Naive thymus-derived CD4-positive, alpha-beta T cell (primary cell): ENCODE measurements at regions of chr11 and their contacts with region 1.

Region 1: GRCh38 chr11:46238967-46239800 is 38.3 kb upstream of the CREB3L1 start:
- DNase-seq: peak; percentile 62 to 89 (median 78)
- ATAC-seq: peak; percentile 86
- H3K4me3 ChIP-seq: peak overlapping the region; percentile 55
- H3K4me3 Mint-ChIP-seq: peak overlapping the region in 9 of 10 donors; percentile 32 to 79 (median 74)
- H3K27ac ChIP-seq: no peak overlapping the region
- H3K27ac Mint-ChIP-seq: peak overlapping the region in 1 of 9 donors; percentile 43
- H3K4me1 ChIP-seq: peaks cover 12 to 20% of the 10 kb centered on the region in 2 donors
- H3K4me1 Mint-ChIP-seq: peaks cover 18 to 46% (median 31%) of the 10 kb centered on the region in 7 donors
- H3K27me3 ChIP-seq: peaks cover 0 to 4% of the 10 kb centered on the region in 2 donors
- H3K27me3 Mint-ChIP-seq: peaks cover 14 to 28% (median 19%) of the 10 kb centered on the region in 5 donors

Region 2: GRCh38 chr11:45964911-45965389 is 274.2 kb before region 1 on chr11:
- CTCF ChIA-PET with region 1: interaction called, 9 read pairs
- POLR2A ChIA-PET with region 1: no interaction called
- intact Hi-C with region 1: loop called (anchors 5 to 10 kb)
- DNase-seq: peak; percentile 11 to 68 (median 61)
- ATAC-seq: peak; percentile 96
- H3K4me3 ChIP-seq: no peak overlapping the region
- H3K4me3 Mint-ChIP-seq: no peak overlapping the region
- H3K27ac ChIP-seq: no peak overlapping the region
- H3K27ac Mint-ChIP-seq: no peak overlapping the region
- H3K4me1 ChIP-seq: no peaks in the 10 kb centered on the region
- H3K4me1 Mint-ChIP-seq: no peaks in the 10 kb centered on the region
- H3K27me3 ChIP-seq: no peaks in the 10 kb centered on the region
- H3K27me3 Mint-ChIP-seq: no peaks in the 10 kb centered on the region

Region 3: DNA sequence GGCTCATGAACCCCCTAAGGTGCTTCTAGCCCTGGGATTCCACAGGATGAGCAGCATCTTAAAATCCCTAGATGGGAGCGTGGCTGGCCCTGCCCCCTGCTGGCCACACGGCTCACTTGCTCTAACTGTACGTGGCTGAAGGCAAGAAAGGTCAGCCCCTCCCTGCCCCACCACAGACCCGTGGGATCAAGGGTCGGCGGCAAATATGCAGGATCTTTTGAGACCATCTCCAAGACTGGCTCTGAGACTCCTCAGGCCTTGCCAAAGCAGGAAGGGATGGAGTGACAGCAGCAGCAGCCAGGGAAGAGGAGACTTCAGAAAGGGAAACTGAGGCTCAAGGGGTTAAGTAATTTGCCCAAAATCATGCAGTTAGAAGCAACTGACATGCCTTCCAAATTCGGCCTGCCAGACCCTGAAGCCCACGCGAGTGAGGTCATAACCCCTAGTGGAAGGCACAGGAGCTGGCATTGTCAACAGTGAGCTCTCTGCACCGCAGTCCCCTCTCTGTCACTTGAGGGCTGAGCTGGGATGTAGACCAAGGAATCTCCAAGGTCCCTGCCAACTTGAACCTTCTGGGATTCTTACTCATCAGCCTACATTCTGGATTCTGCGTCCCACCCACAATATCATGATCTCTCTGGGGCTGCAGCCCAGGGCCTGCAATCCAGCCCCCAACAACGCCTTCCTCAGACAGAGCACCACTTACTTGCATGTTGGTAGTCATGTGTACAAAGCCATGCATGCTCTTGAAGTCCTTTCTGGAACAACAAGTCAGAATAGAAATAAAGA is 69.6 kb after region 1 on chr11:
- CTCF ChIA-PET with region 1: interaction called, 49 read pairs
- POLR2A ChIA-PET with region 1: interaction called, 3 read pairs
- intact Hi-C with region 1: loop called (anchors 1 kb)
- DNase-seq: peak; percentile 29 to 66 (median 53)
- ATAC-seq: peak; percentile 78
- H3K4me3 ChIP-seq: no peak overlapping the region
- H3K4me3 Mint-ChIP-seq: peak overlapping the region in 2 of 10 donors; percentile 53 to 56
- H3K27ac ChIP-seq: no peak overlapping the region
- H3K27ac Mint-ChIP-seq: peak overlapping the region in 3 of 9 donors; percentile 38 to 56 (median 44)
- H3K4me1 ChIP-seq: peaks cover 0 to 5% of the 10 kb centered on the region in 2 donors
- H3K4me1 Mint-ChIP-seq: peaks cover 10 to 23% (median 19%) of the 10 kb centered on the region in 7 donors
- H3K27me3 ChIP-seq: no peaks in the 10 kb centered on the region
- H3K27me3 Mint-ChIP-seq: peaks cover 0 to 3% (median 0%) of the 10 kb centered on the region in 5 donors

Region 4: DNA sequence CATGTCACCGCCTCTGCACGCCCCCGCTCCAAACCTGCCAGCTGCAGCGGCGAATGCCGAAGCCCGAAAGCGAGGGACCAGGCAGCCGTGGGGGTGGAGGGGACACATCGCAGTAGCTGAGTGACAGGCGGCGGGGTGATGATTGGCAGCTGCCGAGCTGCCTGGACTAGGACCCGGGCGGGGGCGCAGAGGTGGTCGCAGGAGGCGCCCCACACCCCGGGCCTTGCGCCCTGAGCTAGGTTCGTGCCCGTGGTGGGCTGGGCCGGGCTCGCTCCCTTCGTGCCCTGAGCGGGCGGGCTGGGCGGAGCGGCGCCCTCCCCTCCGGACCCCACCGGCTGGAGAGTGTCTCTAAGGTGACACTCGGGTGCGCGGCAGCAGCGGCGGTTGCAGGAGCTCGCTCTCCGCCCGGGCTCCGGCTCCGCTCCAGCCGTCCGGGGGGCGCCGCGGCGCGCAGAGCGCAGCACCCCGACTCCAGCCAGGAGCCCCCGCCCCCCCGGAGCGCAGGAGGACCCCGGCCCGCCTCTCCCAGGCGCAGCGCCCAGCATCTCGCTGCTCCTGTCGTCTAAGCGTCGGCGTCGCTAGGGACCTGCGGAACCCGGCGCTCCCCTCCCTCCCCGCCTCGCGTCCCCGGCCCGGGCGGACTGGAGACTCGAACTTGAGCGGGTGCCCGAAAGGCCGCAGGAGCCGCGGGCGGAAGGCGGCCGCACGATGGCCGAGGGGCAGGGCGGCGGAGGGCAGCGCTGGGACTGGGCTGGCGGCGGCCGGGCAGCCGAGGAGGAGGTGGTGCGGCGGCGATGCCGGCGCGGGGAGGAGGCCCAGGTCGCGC is 93.6 kb after region 1 on chr11:
- CTCF ChIA-PET with region 1: interaction called, 11 read pairs
- POLR2A ChIA-PET with region 1: interaction called, 7 read pairs
- intact Hi-C with region 1: no loop called
- DNase-seq: peak in 6 of 9 donors; percentile 49 to 66 (median 56)
- ATAC-seq: peak; percentile 28
- H3K4me3 ChIP-seq: peak overlapping the region; percentile 66
- H3K4me3 Mint-ChIP-seq: peak overlapping the region; percentile 66 to 97 (median 90)
- H3K27ac ChIP-seq: peak overlapping the region; percentile 71
- H3K27ac Mint-ChIP-seq: peak overlapping the region in 8 of 9 donors; percentile 86 to 98 (median 96)
- H3K4me1 ChIP-seq: peaks cover 29 to 71% of the 10 kb centered on the region in 2 donors
- H3K4me1 Mint-ChIP-seq: peaks cover 40 to 83% (median 71%) of the 10 kb centered on the region in 7 donors
- H3K27me3 ChIP-seq: peaks cover 0 to 3% of the 10 kb centered on the region in 2 donors
- H3K27me3 Mint-ChIP-seq: peaks cover 0 to 59% (median 0%) of the 10 kb centered on the region in 5 donors

Region 5: GRCh38 chr11:46352063-46352841 is 113.1 kb after region 1 on chr11:
- CTCF ChIA-PET with region 1: interaction called, 29 read pairs
- POLR2A ChIA-PET with region 1: interaction called, 3 read pairs
- intact Hi-C with region 1: loop called (anchors 1 kb)
- DNase-seq: peak; percentile 66 to 83 (median 77)
- ATAC-seq: peak; percentile 68
- H3K4me3 ChIP-seq: peak overlapping the region; percentile 59
- H3K4me3 Mint-ChIP-seq: peak overlapping the region; percentile 81 to 97 (median 86)
- H3K27ac ChIP-seq: peak overlapping the region; percentile 74
- H3K27ac Mint-ChIP-seq: peak overlapping the region; percentile 66 to 97 (median 91)
- H3K4me1 ChIP-seq: peaks cover 60 to 69% of the 10 kb centered on the region in 2 donors
- H3K4me1 Mint-ChIP-seq: peaks cover 59 to 82% (median 72%) of the 10 kb centered on the region in 7 donors
- H3K27me3 ChIP-seq: no peaks in the 10 kb centered on the region
- H3K27me3 Mint-ChIP-seq: no peaks in the 10 kb centered on the region

Region 6: GRCh38 chr11:46529095-46529905 is 290.1 kb after region 1 on chr11:
- CTCF ChIA-PET with region 1: interaction called, 5 read pairs
- POLR2A ChIA-PET with region 1: no interaction called
- intact Hi-C with region 1: loop called in 1 of 2 experiments (anchors 1 kb)
- DNase-seq: peak; percentile 39 to 75 (median 68)
- ATAC-seq: peak; percentile 99
- H3K4me3 ChIP-seq: no peak overlapping the region
- H3K4me3 Mint-ChIP-seq: no peak overlapping the region
- H3K27ac ChIP-seq: no peak overlapping the region
- H3K27ac Mint-ChIP-seq: peak overlapping the region in 1 of 9 donors; percentile 65
- H3K4me1 ChIP-seq: peaks cover 0 to 8% of the 10 kb centered on the region in 2 donors
- H3K4me1 Mint-ChIP-seq: peaks cover 17 to 49% (median 38%) of the 10 kb centered on the region in 7 donors
- H3K27me3 ChIP-seq: no peaks in the 10 kb centered on the region
- H3K27me3 Mint-ChIP-seq: no peaks in the 10 kb centered on the region